Dorsolateral prefrontal cortex (tissue), 120 donors: ENCODE measurements at regions of chr15 and their contacts with region 1.

Region 1: GRCh38 chr15:101070502-101071273 is 151.5 kb downstream of the LRRK1 start:
- DNase-seq: peak in 1 of 10 donors; percentile 13
- H3K4me3 ChIP-seq: no peak overlapping the region
- H3K27ac ChIP-seq: peak overlapping the region in 17 of 59 donors; percentile 1 to 61 (median 30)
- H3K27me3 ChIP-seq: no peaks in the 10 kb centered on the region
- CTCF ChIP-seq: no peak

Region 2: GRCh38 chr15:101027273-101027901 is 43.3 kb before region 1 on chr15:
- intact Hi-C with region 1: loop called in 1 of 2 experiments (anchors 5 kb)
- DNase-seq: peak in 5 of 10 donors; percentile 7 to 36 (median 20)
- H3K4me3 ChIP-seq: no peak overlapping the region
- H3K27ac ChIP-seq: peak overlapping the region in 5 of 59 donors; percentile 2 to 35 (median 18)
- H3K27me3 ChIP-seq: no peaks in the 10 kb centered on the region
- CTCF ChIP-seq: no peak

Region 3: DNA sequence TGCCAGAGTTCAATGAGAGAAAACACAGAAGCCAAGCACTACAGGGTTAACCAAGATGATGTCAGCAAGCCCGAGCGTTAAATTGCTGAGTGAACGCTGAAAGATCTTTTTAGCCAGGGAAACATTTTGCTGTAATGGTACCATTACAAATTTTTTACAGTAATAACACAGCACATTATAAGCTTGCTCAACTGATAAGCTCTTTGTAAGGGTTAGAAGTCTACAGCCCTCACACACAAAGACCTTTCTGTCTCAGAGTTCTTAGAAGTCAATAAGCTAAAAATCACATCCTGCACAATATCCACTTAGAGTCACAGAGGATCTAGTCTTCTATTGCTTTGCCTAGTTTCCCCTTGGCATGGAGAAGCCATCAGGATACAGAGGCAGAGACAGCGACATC is 151.2 kb after region 1 on chr15:
- intact Hi-C with region 1: no loop called
- DNase-seq: no peak
- H3K4me3 ChIP-seq: peak overlapping the region in 2 of 59 donors; percentile 1 to 13
- H3K27ac ChIP-seq: no peak overlapping the region
- H3K27me3 ChIP-seq: no peaks in the 10 kb centered on the region
- CTCF ChIP-seq: no peak